Activated CD4-positive, alpha-beta memory T cell treated with anti-CD3 and anti-CD28 coated beads, Interleukin-2, amount 10 ng/mL, durations not matched to agents 7 days and 5 days (primary cell): ENCODE measurements at regions of chr10 and their contacts with region 1.

Region 1: DNA sequence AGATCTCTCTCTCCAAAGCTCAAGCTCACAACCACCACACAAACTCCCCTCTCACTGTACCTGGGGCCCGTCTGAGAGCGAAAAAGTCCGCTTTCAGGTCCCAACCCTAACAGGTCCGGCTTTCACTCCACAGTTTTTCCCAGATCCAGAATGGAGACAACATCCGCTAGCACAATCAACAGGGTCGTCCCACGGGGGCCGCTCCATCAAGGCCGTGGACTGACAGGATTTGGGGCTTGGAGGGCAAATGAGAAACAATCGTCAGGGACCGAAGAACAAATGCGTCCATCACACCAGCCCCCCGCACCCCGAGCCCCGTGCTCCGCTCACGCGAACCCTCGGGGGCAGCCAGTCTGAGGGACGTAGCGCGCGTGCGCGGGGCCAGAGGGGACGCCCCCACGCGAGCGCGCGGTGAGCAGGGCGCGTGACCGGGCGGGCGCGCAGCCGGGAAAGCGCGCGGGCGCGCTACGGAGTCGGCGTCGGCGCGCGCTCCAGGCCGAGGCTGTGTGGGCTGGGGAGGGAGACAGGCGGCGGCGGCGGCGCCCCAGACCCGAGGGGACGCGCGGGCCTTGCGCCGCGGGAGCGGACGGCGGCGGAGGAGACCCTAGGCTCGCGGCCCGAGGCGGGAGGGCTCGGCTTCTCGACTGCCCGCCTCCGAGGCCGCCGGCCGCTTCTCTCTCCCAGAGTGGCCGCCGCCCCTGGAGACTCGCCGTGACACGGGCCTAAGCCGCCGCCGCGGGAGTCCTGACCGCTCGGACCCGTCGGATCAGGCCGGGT is at the start of gene SLK:
- DNase-seq: peak; percentile 86
- H3K4me3 Mint-ChIP-seq: peak within 1 kb of the TSS; percentile 100
- H3K27ac Mint-ChIP-seq: peak within 1 kb of the TSS; percentile 86
- H3K4me1 Mint-ChIP-seq: peaks cover 33% of the 10 kb centered on the region
- H3K27me3 Mint-ChIP-seq: no peaks in the 10 kb centered on the region
- total RNA-seq, gene SLK: 32.7 to 36.3 TPM

Region 2: GRCh38 chr10:103739039-103739764 is 227.7 kb before region 1 on chr10:
- CTCF ChIA-PET with region 1: no interaction called
- POLR2A ChIA-PET with region 1: no interaction called
- DNase-seq: no peak
- H3K4me3 Mint-ChIP-seq: no peak overlapping the region
- H3K27ac Mint-ChIP-seq: no peak overlapping the region
- H3K4me1 Mint-ChIP-seq: peaks cover 7% of the 10 kb centered on the region
- H3K27me3 Mint-ChIP-seq: no peaks in the 10 kb centered on the region

Region 3: GRCh38 chr10:103759100-103759781 is 207.6 kb before region 1 on chr10:
- CTCF ChIA-PET with region 1: no interaction called
- POLR2A ChIA-PET with region 1: no interaction called
- DNase-seq: peak; percentile 51
- H3K4me3 Mint-ChIP-seq: no peak overlapping the region
- H3K27ac Mint-ChIP-seq: peak overlapping the region; percentile 75
- H3K4me1 Mint-ChIP-seq: peaks cover 67% of the 10 kb centered on the region
- H3K27me3 Mint-ChIP-seq: no peaks in the 10 kb centered on the region

Region 4: GRCh38 chr10:103911021-103911459 is 55.8 kb before region 1 on chr10:
- CTCF ChIA-PET with region 1: no interaction called
- POLR2A ChIA-PET with region 1: interaction called, 28 read pairs
- DNase-seq: peak; percentile 69
- H3K4me3 Mint-ChIP-seq: peak overlapping the region; percentile 65
- H3K27ac Mint-ChIP-seq: peak overlapping the region; percentile 98
- H3K4me1 Mint-ChIP-seq: peaks cover 76% of the 10 kb centered on the region
- H3K27me3 Mint-ChIP-seq: no peaks in the 10 kb centered on the region

Region 5: DNA sequence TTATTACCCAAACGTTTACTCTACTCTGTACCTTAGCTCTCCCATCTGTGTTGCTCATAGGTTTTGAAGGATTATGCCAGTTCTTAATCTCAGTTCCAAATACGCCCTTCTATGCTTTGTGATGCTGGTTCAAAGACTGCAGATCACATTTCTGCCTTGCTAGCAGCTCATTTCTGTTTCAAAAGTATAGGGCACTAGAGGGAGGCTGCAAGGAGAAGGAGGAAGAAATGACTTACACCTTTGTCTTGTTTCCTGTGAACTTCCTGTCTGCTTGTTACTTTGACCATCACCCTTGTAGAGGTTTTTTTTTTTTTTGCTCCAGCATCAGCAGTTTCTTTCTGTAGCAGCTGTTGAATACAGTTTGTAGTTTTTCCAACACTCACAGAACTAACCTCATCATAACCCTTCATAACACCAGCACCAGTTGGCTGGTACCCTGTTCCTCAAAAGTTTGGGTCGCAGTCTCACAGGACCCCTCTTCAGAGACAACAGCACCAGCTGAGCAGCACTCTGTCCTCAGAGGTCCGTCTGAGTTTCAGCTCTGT is 16.6 kb after region 1 on chr10:
- CTCF ChIA-PET with region 1: interaction called, 4 read pairs
- POLR2A ChIA-PET with region 1: interaction called, 19 read pairs
- DNase-seq: peak; percentile 22
- H3K4me3 Mint-ChIP-seq: peak overlapping the region; percentile 51
- H3K27ac Mint-ChIP-seq: peak overlapping the region; percentile 74
- H3K4me1 Mint-ChIP-seq: peaks cover 54% of the 10 kb centered on the region
- H3K27me3 Mint-ChIP-seq: no peaks in the 10 kb centered on the region

Region 6: DNA sequence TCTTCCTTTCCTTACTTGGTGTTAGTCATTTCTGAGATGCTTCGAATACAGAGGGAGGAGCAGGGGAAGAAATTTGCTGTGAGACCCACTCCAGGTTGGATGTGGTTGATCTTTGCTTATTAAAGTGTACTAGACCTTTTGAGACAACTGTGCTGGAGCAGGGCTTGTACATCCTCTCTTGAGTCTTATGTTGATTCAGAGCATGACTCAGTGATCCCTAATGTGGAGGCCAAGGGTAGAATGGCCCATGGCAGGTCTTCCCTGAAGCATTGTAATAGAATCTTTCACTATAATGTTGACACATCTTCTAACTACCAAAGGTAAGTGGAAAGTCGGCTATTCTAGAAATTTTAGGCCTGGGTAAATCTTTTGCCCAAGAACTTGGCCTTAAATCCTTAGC is 138.1 kb after region 1 on chr10:
- CTCF ChIA-PET with region 1: no interaction called
- POLR2A ChIA-PET with region 1: no interaction called
- DNase-seq: no peak
- H3K4me3 Mint-ChIP-seq: no peak overlapping the region
- H3K27ac Mint-ChIP-seq: no peak overlapping the region
- H3K4me1 Mint-ChIP-seq: peaks cover 6% of the 10 kb centered on the region
- H3K27me3 Mint-ChIP-seq: peaks cover 11% of the 10 kb centered on the region